ENCODE measurements at regions of chr7 and their contacts with region 1.

Region 1: DNA sequence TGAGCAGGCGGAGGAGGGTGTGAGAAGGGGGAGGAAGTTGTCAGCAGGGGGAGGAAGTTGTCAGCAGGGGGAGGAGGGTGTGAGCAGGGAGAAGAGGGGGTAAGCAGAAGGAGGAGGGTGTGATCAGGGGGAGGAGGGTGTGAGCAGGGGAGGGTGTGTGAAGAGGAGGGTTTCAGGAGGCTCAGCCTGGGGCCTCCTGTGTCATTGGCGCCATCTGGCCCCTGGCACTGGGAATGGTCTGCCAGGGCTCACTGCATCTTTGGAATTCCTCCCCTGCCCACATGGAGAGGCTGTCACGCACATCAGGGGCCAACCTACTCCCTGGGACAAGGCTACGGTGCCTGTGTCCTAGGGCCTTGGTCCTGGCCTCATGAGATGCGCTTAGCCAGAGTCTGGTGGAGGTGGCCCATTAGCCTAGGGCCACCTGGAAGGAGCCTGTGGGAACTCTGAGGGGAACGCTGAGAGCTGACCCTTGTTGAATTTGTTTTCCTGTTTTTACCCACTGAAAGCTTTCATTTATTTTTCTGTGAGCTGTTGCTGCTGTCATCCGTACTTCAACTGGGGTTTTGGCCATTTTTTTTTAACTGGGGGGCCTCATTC is 18.0 kb downstream of the CAMK2B start:
- DNase-seq: peak in 3 of 5 donors; percentile 61 to 76 (median 76)
- ATAC-seq: peak; percentile 74 to 86 (median 76)
- H3K4me3 ChIP-seq: no peak overlapping the region
- H3K27ac ChIP-seq: peak overlapping the region in 6 of 12 donors; percentile 40 to 89 (median 58)
- H3K4me1 ChIP-seq: peaks cover 4 to 42% (median 19%) of the 10 kb centered on the region in 12 donors
- H3K27me3 ChIP-seq: peaks cover 0 to 24% (median 0%) of the 10 kb centered on the region in 9 donors
- CTCF ChIP-seq: peak in 8 of 12 donors; percentile 33 to 47 (median 42)
- POLR2A ChIP-seq: no peak

Region 2: GRCh38 chr7:43879477-43879876 is 427.9 kb before region 1 on chr7:
- intact Hi-C with region 1: no loop called
- DNase-seq: no peak
- ATAC-seq: no peak
- H3K4me3 ChIP-seq: no peak overlapping the region
- H3K27ac ChIP-seq: peak overlapping the region in 1 of 12 donors; percentile 28
- H3K4me1 ChIP-seq: peaks cover 0 to 29% (median 16%) of the 10 kb centered on the region in 12 donors
- H3K27me3 ChIP-seq: no peaks in the 10 kb centered on the region
- CTCF ChIP-seq: no peak
- POLR2A ChIP-seq: no peak

Region 3: DNA sequence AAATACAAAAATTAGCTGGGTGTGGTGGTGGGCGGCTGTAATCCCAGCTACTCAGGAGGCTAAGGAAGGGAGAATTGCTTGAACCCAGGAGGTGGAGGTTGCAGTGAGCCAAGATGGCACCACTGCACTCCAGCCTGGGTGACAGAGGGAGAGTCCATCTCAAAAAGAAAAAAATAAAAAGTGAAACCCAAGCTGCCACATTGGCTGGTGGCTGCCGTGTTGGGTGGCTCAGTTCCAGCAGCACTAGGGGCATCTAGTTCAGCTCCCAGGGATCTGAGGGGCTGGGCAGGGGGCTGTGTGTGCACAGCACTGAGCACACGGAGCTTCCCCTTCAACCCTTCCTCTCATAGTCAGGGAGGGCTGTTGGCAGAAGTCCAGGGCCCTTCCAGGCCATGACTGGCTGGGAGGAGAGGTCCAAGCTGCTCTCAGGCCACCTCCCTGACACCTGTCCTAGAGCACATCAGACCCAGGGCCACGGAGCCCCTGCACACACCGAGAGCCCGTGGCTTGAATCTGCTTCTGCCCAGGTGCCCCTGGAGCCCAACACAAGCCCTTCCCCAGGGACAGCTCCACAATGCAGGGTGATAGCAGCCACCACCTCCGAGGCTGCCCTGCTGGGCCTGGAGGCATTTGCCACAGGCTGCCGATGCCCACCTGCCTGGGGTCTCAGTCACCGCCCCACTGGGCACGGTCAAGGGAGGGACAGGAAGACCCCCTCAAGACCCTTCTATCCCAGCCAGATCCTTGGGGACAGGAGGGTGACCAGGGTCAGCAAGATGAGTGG is 59.3 kb before region 1 on chr7:
- intact Hi-C with region 1: loop called in 8 of 10 experiments (anchors 5 kb)
- DNase-seq: no peak
- ATAC-seq: no peak
- H3K4me3 ChIP-seq: no peak overlapping the region
- H3K27ac ChIP-seq: no peak overlapping the region
- H3K4me1 ChIP-seq: peaks cover 0 to 8% (median 0%) of the 10 kb centered on the region in 12 donors
- H3K27me3 ChIP-seq: no peaks in the 10 kb centered on the region
- CTCF ChIP-seq: no peak
- POLR2A ChIP-seq: no peak

Region 4: GRCh38 chr7:44257618-44258422 is 49.6 kb before region 1 on chr7:
- intact Hi-C with region 1: loop called in 1 of 10 experiments (anchors 5 kb)
- DNase-seq: peak; percentile 83 to 93 (median 87)
- ATAC-seq: peak; percentile 89 to 93 (median 92)
- H3K4me3 ChIP-seq: no peak overlapping the region
- H3K27ac ChIP-seq: peak overlapping the region; percentile 75 to 96 (median 88)
- H3K4me1 ChIP-seq: peaks cover 18 to 76% (median 56%) of the 10 kb centered on the region in 12 donors
- H3K27me3 ChIP-seq: no peaks in the 10 kb centered on the region
- CTCF ChIP-seq: peak in 4 of 12 donors; percentile 19 to 34 (median 30)
- POLR2A ChIP-seq: no peak

Region 5: DNA sequence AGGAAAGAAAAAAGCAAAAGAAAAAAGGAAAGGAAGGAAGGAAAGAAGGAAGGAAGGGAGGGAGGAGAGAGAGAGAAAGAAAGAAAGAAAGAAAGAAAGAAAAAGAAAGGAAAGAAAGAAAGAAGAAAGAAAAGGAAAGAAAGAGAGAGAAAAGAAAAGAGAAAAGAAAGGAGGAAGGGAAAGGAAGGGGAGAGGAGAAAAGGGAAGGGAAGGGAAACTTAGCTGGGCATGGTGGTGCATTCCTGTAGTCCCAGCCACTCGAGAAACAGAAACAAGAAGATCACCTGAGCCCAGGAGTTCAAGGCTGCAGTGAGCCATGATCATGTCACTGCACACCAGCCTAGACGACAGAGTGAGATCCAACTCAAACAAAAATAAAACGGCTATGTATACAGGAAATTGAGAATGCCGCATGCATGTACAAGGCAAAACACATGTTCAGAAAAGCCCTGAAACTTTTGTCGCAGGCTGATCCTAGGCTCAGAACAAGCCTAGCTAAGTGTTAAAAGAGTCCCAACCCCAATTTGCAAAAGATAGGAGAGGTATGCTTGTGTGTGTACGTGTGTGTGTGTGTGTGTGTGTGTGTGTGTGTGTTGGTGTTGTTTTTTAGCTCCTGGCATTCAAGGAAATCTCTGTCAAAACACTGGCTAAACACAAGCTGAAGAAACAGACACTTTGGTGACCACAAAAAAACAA is 240.3 kb after region 1 on chr7:
- intact Hi-C with region 1: no loop called
- DNase-seq: no peak
- ATAC-seq: no peak
- H3K4me3 ChIP-seq: no peak overlapping the region
- H3K27ac ChIP-seq: no peak overlapping the region
- H3K4me1 ChIP-seq: no peaks in the 10 kb centered on the region
- H3K27me3 ChIP-seq: no peaks in the 10 kb centered on the region
- CTCF ChIP-seq: no peak
- POLR2A ChIP-seq: no peak

Region 6: GRCh38 chr7:44986218-44987053 is 679.0 kb after region 1 on chr7:
- intact Hi-C with region 1: no loop called
- DNase-seq: peak; percentile 94 to 98 (median 97)
- ATAC-seq: peak; percentile 98 to 99 (median 98)
- H3K4me3 ChIP-seq: peak overlapping the region; percentile 18 to 74 (median 62)
- H3K27ac ChIP-seq: peak overlapping the region; percentile 89 to 98 (median 96)
- H3K4me1 ChIP-seq: peaks cover 0 to 54% (median 24%) of the 10 kb centered on the region in 12 donors
- H3K27me3 ChIP-seq: no peaks in the 10 kb centered on the region
- CTCF ChIP-seq: no peak
- POLR2A ChIP-seq: peak; percentile 39 to 96

Measured in heart left ventricle (tissue), 16 donors.